Naive thymus-derived CD4-positive, alpha-beta T cell (primary cell): ENCODE measurements at regions of chr15 and their contacts with region 1.

Region 1: DNA sequence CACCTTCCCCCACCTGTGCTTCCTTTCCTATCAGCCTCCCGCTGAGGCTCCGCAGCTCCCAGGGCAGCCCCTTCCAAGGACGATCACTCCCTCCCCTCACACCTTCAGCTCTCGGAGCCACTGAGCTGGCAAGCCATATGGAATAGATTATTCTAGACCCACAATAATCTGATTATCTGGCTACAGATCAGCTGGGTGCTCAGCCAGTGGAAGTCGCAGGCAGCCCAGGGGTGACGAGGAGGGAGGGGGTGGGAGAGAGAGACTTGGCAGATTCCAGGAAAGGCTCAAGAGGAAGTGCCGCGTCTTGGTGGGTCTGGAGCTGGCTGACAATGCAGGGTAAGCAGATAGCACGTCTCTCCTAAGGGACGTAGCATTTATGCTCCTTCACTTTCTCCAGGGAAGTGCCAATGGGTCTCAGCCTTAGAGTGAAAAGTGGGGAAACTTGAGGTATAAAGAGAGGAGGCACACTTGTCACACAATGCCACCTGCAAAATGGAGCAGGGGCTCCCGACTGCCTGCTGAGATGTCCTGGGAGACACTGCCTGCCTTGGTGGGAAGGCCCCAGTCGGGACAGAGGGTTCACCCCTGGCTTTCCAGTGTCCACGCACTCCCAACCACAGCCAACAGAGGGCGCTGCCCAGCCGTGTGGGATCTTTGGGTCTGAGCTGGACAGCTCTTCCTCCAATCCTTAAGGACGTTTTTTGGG is 9.4 kb upstream of the MESP1 start:
- DNase-seq: peak in 7 of 9 donors; percentile 30 to 85 (median 50)
- ATAC-seq: peak; percentile 91
- H3K4me3 ChIP-seq: no peak overlapping the region
- H3K4me3 Mint-ChIP-seq: no peak overlapping the region
- H3K27ac ChIP-seq: no peak overlapping the region
- H3K27ac Mint-ChIP-seq: no peak overlapping the region
- H3K4me1 ChIP-seq: no peaks in the 10 kb centered on the region
- H3K4me1 Mint-ChIP-seq: peaks cover 0 to 5% (median 0%) of the 10 kb centered on the region in 7 donors
- H3K27me3 ChIP-seq: no peaks in the 10 kb centered on the region
- H3K27me3 Mint-ChIP-seq: peaks cover under 1 to 21% (median 8%) of the 10 kb centered on the region in 5 donors

Region 2: DNA sequence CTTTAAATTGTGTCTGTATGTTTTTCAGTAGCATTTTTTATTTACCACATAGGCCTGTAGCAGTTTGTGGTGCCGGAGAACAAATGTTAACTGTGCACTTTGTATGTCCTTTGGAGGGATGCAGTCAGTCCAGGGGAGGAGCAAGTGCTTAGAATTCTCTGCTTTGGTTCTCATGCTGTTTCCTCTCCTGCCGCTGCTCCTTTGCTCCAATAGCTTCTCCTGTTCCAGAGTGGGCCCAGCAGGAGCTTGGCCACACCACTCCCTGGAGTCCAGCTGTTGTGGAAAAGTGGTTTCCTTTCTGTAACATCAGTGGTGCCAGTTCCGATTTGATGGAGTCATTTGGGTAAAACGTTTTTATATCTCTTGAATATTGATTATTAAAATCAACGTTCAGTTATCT is 168.6 kb before region 1 on chr15:
- CTCF ChIA-PET with region 1: no interaction called
- POLR2A ChIA-PET with region 1: no interaction called
- intact Hi-C with region 1: no loop called
- DNase-seq: no peak
- ATAC-seq: no peak
- H3K4me3 ChIP-seq: no peak overlapping the region
- H3K4me3 Mint-ChIP-seq: no peak overlapping the region
- H3K27ac ChIP-seq: no peak overlapping the region
- H3K27ac Mint-ChIP-seq: no peak overlapping the region
- H3K4me1 ChIP-seq: peaks cover 0 to 5% of the 10 kb centered on the region in 2 donors
- H3K4me1 Mint-ChIP-seq: peaks cover 0 to 6% (median 0%) of the 10 kb centered on the region in 7 donors
- H3K27me3 ChIP-seq: no peaks in the 10 kb centered on the region
- H3K27me3 Mint-ChIP-seq: no peaks in the 10 kb centered on the region

Region 3: DNA sequence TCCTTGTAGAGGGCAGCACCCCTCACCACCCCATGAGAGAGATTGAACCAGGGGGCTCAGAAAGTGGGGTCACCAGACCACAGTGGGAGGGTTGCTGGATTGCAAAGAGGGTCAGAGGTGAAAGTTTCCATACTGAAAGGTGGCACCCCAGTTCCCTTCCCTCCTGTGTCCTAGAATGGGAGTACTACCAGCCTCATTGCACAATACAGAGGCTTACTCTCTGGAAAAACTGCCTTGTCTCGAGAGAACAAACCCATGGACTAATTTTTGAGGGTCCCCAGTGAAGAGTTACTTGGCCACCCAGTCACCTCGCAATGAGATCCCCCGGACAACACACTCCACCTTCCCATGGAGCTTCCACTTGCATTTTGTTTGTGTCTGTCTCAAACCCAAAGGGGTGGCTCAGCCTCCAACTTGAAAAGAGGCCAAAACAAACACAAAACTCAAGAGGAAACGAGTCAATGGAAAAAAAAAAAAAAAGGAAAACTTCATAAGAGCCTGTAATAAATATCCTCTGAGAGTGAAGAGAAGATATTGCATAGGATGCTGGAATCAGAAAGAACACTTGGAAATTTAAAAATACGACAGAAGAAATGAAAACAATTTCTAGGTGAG is 34.3 kb after region 1 on chr15:
- CTCF ChIA-PET with region 1: no interaction called
- POLR2A ChIA-PET with region 1: no interaction called
- intact Hi-C with region 1: no loop called
- DNase-seq: no peak
- ATAC-seq: no peak
- H3K4me3 ChIP-seq: no peak overlapping the region
- H3K4me3 Mint-ChIP-seq: no peak overlapping the region
- H3K27ac ChIP-seq: no peak overlapping the region
- H3K27ac Mint-ChIP-seq: no peak overlapping the region
- H3K4me1 ChIP-seq: no peaks in the 10 kb centered on the region
- H3K4me1 Mint-ChIP-seq: peaks cover 0 to 2% (median 0%) of the 10 kb centered on the region in 7 donors
- H3K27me3 ChIP-seq: no peaks in the 10 kb centered on the region
- H3K27me3 Mint-ChIP-seq: peaks cover 0 to 9% (median 0%) of the 10 kb centered on the region in 5 donors

Region 4: GRCh38 chr15:89874926-89875564 is 114.6 kb after region 1 on chr15:
- CTCF ChIA-PET with region 1: interaction called, 4 read pairs
- POLR2A ChIA-PET with region 1: no interaction called
- intact Hi-C with region 1: loop called (anchors 1 kb)
- DNase-seq: peak; percentile 58 to 80 (median 74)
- ATAC-seq: peak; percentile 99
- H3K4me3 ChIP-seq: no peak overlapping the region
- H3K4me3 Mint-ChIP-seq: peak overlapping the region in 1 of 10 donors; percentile 21
- H3K27ac ChIP-seq: no peak overlapping the region
- H3K27ac Mint-ChIP-seq: peak overlapping the region in 4 of 9 donors; percentile 34 to 77 (median 48)
- H3K4me1 ChIP-seq: no peaks in the 10 kb centered on the region
- H3K4me1 Mint-ChIP-seq: peaks cover 0 to 7% (median 5%) of the 10 kb centered on the region in 7 donors
- H3K27me3 ChIP-seq: no peaks in the 10 kb centered on the region
- H3K27me3 Mint-ChIP-seq: no peaks in the 10 kb centered on the region

Region 5: GRCh38 chr15:90031231-90031791 is 270.9 kb after region 1 on chr15:
- CTCF ChIA-PET with region 1: no interaction called
- POLR2A ChIA-PET with region 1: no interaction called
- intact Hi-C with region 1: no loop called
- DNase-seq: peak in 5 of 9 donors; percentile 11 to 40 (median 16)
- ATAC-seq: peak; percentile 31
- H3K4me3 ChIP-seq: no peak overlapping the region
- H3K4me3 Mint-ChIP-seq: peak overlapping the region; percentile 42 to 71 (median 58)
- H3K27ac ChIP-seq: no peak overlapping the region
- H3K27ac Mint-ChIP-seq: peak overlapping the region; percentile 23 to 81 (median 60)
- H3K4me1 ChIP-seq: peaks cover 29 to 37% of the 10 kb centered on the region in 2 donors
- H3K4me1 Mint-ChIP-seq: peaks cover 32 to 61% (median 52%) of the 10 kb centered on the region in 7 donors
- H3K27me3 ChIP-seq: no peaks in the 10 kb centered on the region
- H3K27me3 Mint-ChIP-seq: no peaks in the 10 kb centered on the region

Region 6: GRCh38 chr15:90086868-90087268 is 326.4 kb after region 1 on chr15:
- CTCF ChIA-PET with region 1: no interaction called
- POLR2A ChIA-PET with region 1: no interaction called
- intact Hi-C with region 1: loop called in 1 of 2 experiments (anchors 2 kb)
- DNase-seq: peak in 8 of 9 donors; percentile 17 to 57 (median 43)
- ATAC-seq: peak; percentile 83
- H3K4me3 ChIP-seq: no peak overlapping the region
- H3K4me3 Mint-ChIP-seq: no peak overlapping the region
- H3K27ac ChIP-seq: no peak overlapping the region
- H3K27ac Mint-ChIP-seq: peak overlapping the region; percentile 23 to 91 (median 72)
- H3K4me1 ChIP-seq: no peaks in the 10 kb centered on the region
- H3K4me1 Mint-ChIP-seq: peaks cover 0 to 21% (median 10%) of the 10 kb centered on the region in 7 donors
- H3K27me3 ChIP-seq: no peaks in the 10 kb centered on the region
- H3K27me3 Mint-ChIP-seq: no peaks in the 10 kb centered on the region

Region 7: GRCh38 chr15:90915808-90916440 is 1155.5 kb after region 1 on chr15:
- CTCF ChIA-PET with region 1: no interaction called
- POLR2A ChIA-PET with region 1: no interaction called
- intact Hi-C with region 1: no loop called
- DNase-seq: no peak
- ATAC-seq: peak; percentile 79
- H3K4me3 ChIP-seq: no peak overlapping the region
- H3K4me3 Mint-ChIP-seq: no peak overlapping the region
- H3K27ac ChIP-seq: no peak overlapping the region
- H3K27ac Mint-ChIP-seq: peak overlapping the region in 2 of 9 donors; percentile 13 to 31
- H3K4me1 ChIP-seq: no peaks in the 10 kb centered on the region
- H3K4me1 Mint-ChIP-seq: peaks cover 0 to 12% (median 0%) of the 10 kb centered on the region in 7 donors
- H3K27me3 ChIP-seq: no peaks in the 10 kb centered on the region
- H3K27me3 Mint-ChIP-seq: no peaks in the 10 kb centered on the region